HCT116 (cell line): ENCODE measurements at regions of chr5 and their contacts with region 1.

Region 1: DNA sequence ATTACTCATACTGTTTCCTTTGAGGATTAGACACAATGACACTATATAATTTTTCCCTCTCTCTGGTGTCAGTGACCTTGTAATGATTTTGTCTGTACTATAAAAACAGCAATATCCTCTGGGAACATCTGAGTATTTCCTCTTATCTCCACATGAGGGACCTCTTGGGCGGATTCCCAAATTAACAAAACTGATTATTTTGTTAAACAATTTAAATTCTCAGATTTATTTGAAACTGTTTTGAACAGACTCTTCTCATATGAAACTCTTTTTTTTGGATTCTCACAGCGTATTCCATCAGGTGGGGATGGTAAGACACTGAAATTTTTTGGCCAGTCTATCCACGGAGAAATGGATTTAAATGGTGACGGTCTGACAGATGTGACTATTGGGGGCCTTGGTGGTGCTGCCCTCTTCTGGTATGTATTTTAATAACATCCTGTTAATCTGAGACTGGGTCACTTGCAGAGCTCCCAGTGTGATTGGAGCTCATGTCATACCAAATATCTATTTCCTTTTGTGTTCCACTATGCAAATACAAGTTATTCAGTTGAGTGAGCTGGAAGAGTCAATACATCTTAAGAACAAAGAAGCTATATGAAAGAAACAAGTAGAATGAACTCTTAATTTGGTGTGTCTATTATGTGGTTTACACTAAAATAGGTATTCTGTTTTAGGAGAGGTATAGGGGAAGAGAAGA is 73.8 kb upstream of the ITGA2 start:
- DNase-seq: peak; percentile 70
- ATAC-seq: peak; percentile 98
- H3K4me3 ChIP-seq: peak overlapping the region in 1 of 2 experiments; percentile 37; a peak in 3 of 4 replicates
- H3K27ac ChIP-seq: no peak overlapping the region
- H3K4me1 ChIP-seq: peaks cover 0 to 7% of the 10 kb centered on the region in 2 experiments; a peak in 1 of 4 replicates
- H3K27me3 ChIP-seq: no peaks in the 10 kb centered on the region
- CTCF ChIP-seq: peak; percentile 48 to 98 (median 81)
- POLR2A ChIP-seq: no peak
- RAD21 ChIP-seq: peak; percentile 58

Region 2: DNA sequence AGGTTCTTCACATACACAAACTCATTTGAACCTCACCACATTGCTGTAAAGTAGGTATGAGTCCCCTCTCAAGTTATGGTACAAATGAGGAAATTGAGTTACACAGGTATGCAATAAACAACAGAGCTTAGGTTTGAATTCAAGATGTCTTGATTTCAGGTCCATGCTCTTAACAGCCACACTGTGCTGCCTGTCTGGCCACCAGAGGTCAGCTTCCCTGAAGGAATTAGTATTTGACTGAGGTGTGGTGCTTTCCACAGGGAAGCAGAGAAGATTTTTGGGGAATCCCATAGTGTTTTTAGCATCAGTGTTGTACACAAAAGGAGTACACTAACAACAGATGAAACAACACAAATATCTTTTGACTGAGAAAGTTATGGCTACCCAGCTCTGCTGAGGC is 222.0 kb before region 1 on chr5:
- CTCF ChIA-PET with region 1: interaction called, 8 read pairs
- POLR2A ChIA-PET with region 1: no interaction called
- RAD21 ChIA-PET with region 1: no interaction called
- intact Hi-C with region 1: loop called (anchors 2 kb)
- DNase-seq: no peak
- ATAC-seq: peak; percentile 78
- H3K4me3 ChIP-seq: no peak overlapping the region
- H3K27ac ChIP-seq: no peak overlapping the region
- H3K4me1 ChIP-seq: no peaks in the 10 kb centered on the region
- H3K27me3 ChIP-seq: no peaks in the 10 kb centered on the region
- CTCF ChIP-seq: peak; percentile 36 to 69 (median 62); a peak in 5 of 6 replicates
- POLR2A ChIP-seq: no peak
- RAD21 ChIP-seq: peak; percentile 53

Region 3: DNA sequence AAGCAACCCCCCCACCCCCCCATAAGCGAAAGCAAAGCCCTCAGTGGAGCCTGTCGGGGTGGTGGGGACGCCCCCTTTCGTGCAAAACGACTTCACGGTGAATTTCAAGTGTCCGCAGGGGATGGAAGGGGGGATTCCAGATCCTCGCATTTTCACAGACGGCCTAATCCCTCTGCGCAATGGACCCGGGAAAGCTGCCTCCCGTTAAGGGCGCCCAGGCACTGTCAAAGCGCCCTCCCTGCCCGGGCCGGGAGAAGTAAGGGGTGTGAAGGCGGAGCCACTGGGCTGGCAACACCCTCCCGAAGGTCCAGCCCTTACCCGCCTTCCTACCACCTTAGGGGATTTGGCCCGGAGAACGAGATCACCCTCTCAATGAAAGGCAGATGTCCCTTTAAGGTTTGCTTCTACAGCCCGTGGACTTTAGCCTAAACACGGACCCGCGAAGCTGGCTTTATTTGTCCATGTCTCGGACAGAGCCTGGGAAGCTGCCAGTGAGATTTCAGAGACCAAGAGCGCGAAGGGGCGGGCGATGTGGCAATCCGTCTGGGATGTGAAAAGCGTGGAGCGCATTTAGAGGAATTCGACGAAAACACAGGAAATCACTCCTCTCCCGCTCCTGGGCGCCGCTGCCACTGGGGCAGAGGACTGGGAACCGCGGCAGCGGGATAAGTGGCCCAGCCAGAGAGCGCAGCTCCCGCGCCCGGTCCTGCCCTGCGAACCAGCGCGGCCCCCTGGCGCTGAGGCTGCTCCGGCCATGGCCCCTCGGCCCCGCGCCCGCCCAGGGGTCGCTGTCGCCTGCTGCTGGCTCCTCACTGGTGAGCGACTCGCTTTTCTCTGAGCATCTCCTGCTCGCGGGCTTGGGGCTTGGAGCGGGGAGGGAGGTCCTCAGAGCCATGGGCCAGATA is 127.5 kb before region 1 on chr5 and contains the starts of genes ITGA1 and PELO:
- CTCF ChIA-PET with region 1: interaction called, 4 read pairs
- POLR2A ChIA-PET with region 1: no interaction called
- RAD21 ChIA-PET with region 1: no interaction called
- intact Hi-C with region 1: loop called (anchors 1 kb)
- DNase-seq: peak; percentile 59
- ATAC-seq: peak; percentile 91
- H3K4me3 ChIP-seq: peak within 1 kb of the TSS; percentile 50 to 72
- H3K27ac ChIP-seq: peak within 1 kb of the TSS; percentile 54
- H3K4me1 ChIP-seq: peaks cover 15 to 28% of the 10 kb centered on the region in 2 experiments; a peak in 3 of 4 replicates
- H3K27me3 ChIP-seq: no peaks in the 10 kb centered on the region
- CTCF ChIP-seq: peak; percentile 30 to 31 (median 30); a peak in 4 of 6 replicates
- POLR2A ChIP-seq: no peak
- RAD21 ChIP-seq: peak; percentile 21; the same call in 1 of the 2 replicates
- total RNA-seq, gene ITGA1: 1.8 TPM
- total RNA-seq, gene PELO: 16.5 TPM

Region 4: GRCh38 chr5:52799983-52800393 is 115.3 kb before region 1 on chr5:
- CTCF ChIA-PET with region 1: interaction called, 15 read pairs
- POLR2A ChIA-PET with region 1: interaction called, 3 read pairs
- RAD21 ChIA-PET with region 1: no interaction called
- intact Hi-C with region 1: no loop called
- DNase-seq: peak; percentile 83
- ATAC-seq: peak; percentile 87
- H3K4me3 ChIP-seq: peak overlapping the region; percentile 89 to 93
- H3K27ac ChIP-seq: peak overlapping the region; percentile 85
- H3K4me1 ChIP-seq: peaks cover 6 to 27% of the 10 kb centered on the region in 2 experiments; a peak in 3 of 4 replicates
- H3K27me3 ChIP-seq: no peaks in the 10 kb centered on the region
- CTCF ChIP-seq: no peak
- POLR2A ChIP-seq: peak; percentile 45
- RAD21 ChIP-seq: no peak

Region 5: DNA sequence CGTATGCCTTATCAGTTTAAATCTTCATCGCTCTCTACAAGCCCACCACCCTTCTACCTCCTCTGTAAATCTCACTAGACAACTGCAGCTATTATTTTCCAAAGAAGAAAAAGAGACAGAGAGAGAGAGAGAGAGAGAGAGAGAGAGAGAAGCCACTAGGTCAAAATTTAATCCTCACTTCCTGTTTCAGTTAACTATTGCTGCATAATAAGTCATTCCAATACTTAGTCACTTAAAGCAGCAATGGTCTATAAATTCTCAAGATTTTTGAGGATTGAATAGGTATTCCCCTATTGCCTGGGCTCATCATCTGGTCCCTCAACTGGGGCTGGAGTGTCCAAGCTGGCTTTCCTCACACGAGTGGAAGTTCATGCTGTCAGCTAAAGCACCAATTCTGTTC is 58.8 kb before region 1 on chr5:
- CTCF ChIA-PET with region 1: no interaction called
- POLR2A ChIA-PET with region 1: no interaction called
- RAD21 ChIA-PET with region 1: no interaction called
- intact Hi-C with region 1: no loop called
- DNase-seq: no peak
- ATAC-seq: no peak
- H3K4me3 ChIP-seq: no peak overlapping the region
- H3K27ac ChIP-seq: no peak overlapping the region
- H3K4me1 ChIP-seq: no peaks in the 10 kb centered on the region
- H3K27me3 ChIP-seq: no peaks in the 10 kb centered on the region
- CTCF ChIP-seq: no peak
- POLR2A ChIP-seq: no peak
- RAD21 ChIP-seq: no peak